ENCODE measurements at regions of chr17 and their contacts with region 1.

Region 1: GRCh38 chr17:13594762-13595598 is 6.7 kb downstream of the HS3ST3A1 start:
- DNase-seq: peak; percentile 39
- ATAC-seq: peak; percentile 72
- H3K4me3 ChIP-seq: no peak overlapping the region
- H3K27ac ChIP-seq: no peak overlapping the region
- H3K4me1 ChIP-seq: no peaks in the 10 kb centered on the region
- H3K27me3 ChIP-seq: peaks cover 8% of the 10 kb centered on the region; the same call in 1 of the 2 replicates
- CTCF ChIP-seq: peak; percentile 85

Region 2: DNA sequence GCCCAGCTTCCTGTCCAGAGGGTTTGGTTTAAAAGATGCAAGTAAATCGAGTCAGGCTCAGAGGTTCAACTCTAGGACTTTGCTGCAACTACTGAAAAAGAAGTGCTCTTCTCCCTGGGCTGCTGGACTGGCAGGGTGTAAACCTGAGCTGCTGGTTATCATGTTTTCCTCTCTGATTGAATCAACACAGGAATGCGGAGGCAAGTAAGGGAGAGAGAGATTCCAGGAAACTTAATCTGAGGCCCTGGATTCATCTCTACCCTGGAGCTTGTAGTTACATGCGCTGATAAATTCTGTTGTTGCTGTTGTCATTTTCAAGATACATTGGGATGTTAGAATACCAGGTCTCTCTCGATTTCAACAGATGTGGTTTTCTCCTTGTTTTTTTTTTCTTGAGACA is 15.0 kb after region 1 on chr17:
- CTCF ChIA-PET with region 1: no interaction called
- POLR2A ChIA-PET with region 1: no interaction called
- in situ Hi-C with region 1: no loop called
- intact Hi-C with region 1: no loop called
- DNase-seq: no peak
- ATAC-seq: no peak
- H3K4me3 ChIP-seq: no peak overlapping the region
- H3K27ac ChIP-seq: no peak overlapping the region
- H3K4me1 ChIP-seq: no peaks in the 10 kb centered on the region
- H3K27me3 ChIP-seq: no peaks in the 10 kb centered on the region
- CTCF ChIP-seq: no peak

Region 3: DNA sequence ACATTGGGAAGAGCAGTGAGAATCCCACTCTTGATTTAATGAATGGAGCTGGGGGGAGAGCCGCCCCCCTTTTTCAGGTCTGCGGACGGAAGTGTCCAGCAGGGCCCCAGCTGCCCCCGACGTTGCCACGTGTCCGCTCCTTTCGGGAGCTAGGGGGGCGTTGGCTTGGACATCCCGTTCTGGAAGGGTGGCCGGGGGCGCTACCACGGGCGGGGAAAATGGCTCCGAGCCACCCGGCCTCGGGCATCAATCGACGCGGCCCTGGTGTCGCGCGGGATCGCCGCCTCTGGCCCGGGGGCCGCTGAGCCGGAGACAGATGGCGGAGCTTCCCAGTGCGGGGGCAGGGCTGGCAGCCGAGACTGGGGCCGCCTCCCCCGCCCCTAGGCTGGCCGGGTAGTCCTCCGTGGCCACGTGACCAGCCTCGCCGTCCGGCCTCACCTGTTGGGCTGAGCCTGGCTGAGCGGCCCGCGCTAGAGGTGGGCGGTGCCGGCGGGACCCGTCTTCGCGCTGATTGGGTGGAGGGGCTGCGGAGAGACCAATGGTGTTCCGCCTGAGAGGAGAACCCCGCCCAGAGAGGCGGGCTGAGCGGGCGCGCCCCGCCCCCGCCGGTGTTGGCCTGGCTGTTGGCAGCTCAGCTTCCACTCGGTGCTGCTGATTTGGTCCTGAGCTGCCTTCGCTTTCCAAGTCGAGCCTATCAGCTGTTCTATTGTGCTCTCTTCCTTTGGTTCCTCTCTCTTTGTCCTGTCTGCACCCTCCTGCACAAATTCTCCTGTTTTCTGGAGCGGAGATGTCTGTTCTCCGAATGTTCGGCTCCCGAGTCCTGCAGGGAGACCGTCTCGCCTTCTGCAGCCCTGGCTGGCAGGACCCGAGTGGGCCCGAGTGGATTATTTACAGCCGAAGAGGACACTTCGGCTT is 714.2 kb after region 1 on chr17:
- CTCF ChIA-PET with region 1: no interaction called
- POLR2A ChIA-PET with region 1: no interaction called
- in situ Hi-C with region 1: no loop called
- intact Hi-C with region 1: loop called (anchors 5 kb)
- DNase-seq: no peak
- ATAC-seq: peak; percentile 97
- H3K4me3 ChIP-seq: peak overlapping the region; percentile 44 to 60
- H3K27ac ChIP-seq: no peak overlapping the region
- H3K4me1 ChIP-seq: no peaks in the 10 kb centered on the region
- H3K27me3 ChIP-seq: peaks cover 5% of the 10 kb centered on the region; the same call in 1 of the 2 replicates
- CTCF ChIP-seq: no peak

Region 4: DNA sequence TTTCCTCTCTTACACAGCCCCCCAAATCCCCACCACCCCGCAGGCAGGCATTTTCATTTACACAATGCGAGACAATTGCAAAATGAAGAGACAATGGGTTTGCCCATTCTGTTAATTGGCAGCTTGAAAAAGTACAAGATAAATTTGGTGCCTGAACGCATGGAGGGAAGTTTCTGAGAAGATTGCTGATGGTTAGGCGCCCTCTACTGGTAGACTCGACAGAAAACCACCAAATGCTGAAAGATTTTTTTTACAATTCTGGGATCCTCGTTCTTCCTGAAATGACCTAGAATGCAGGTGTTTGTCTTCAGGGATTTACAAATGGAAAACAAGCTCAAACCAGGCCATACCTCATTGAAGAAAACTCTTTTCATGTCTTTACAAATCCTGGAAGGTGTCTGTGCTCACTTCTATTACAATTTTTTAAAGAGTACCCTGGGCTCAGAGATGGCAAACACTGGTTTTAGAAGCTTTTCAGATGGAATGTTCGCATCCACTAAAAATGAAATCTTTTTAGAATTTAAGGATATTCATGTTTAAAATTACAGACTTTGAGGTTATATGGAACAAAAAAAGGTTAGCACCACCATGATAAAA is 1331.6 kb after region 1 on chr17:
- CTCF ChIA-PET with region 1: no interaction called
- POLR2A ChIA-PET with region 1: no interaction called
- in situ Hi-C with region 1: no loop called
- intact Hi-C with region 1: loop called (anchors 5 kb)
- DNase-seq: peak; percentile 22
- ATAC-seq: no peak
- H3K4me3 ChIP-seq: no peak overlapping the region
- H3K27ac ChIP-seq: no peak overlapping the region
- H3K4me1 ChIP-seq: no peaks in the 10 kb centered on the region
- H3K27me3 ChIP-seq: no peaks in the 10 kb centered on the region
- CTCF ChIP-seq: peak; percentile 79